ENCODE measurements at regions of chr9 and their contacts with region 1.

Region 1: DNA sequence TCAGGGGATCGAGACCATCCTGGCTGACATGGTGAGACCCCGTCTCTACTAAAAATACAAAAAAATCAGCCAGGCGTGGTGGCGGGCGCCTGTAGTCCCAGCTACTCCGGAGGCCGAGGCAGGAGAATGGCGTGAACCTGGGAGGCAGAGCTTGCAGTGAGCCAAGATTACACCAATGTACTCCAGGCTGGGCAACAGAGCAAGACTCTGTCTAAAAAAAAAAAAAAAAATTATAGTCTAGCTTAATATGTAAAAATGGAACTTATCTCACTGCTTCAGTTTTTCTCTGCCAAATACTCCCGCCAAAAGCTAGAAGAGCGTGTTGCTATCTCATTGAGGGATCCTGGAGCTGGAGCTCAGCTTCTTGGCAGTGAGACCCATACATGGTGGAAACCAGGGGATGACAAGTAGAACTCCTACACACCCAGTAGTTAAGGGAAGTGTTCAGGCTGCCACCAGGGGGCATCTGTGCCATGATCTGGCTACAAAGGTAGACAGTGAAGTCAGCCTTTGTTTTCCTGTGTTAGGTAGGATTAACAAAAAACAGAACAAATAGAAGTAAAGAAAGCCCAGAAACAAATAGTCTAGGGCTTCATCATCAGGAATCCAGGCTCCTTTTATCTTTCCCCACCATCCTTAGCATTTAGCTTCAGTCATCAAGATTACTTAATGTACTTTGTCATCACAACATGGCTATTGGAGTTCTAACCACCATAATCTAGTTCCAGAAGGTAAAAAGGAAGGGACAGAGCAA is 33.6 kb upstream of the GLIPR2 start:
- DNase-seq: peak; percentile 74 to 86
- ATAC-seq: peak; percentile 90 to 91
- H3K4me3 ChIP-seq: no peak overlapping the region
- H3K27ac ChIP-seq: peak overlapping the region; percentile 26 to 77
- H3K4me1 ChIP-seq: peaks cover 26% of the 10 kb centered on the region
- CTCF ChIP-seq: peak; percentile 71
- EP300 ChIP-seq: no peak
- POLR2A ChIP-seq: no peak
- RAD21 ChIP-seq: peak; percentile 64 to 84; a peak in 4 of 5 replicates

Region 2: GRCh38 chr9:35756275-35757225 is 346.4 kb before region 1 on chr9:
- CTCF ChIA-PET with region 1: no interaction called
- POLR2A ChIA-PET with region 1: no interaction called
- DNase-seq: peak; percentile 64 to 86
- ATAC-seq: peak; percentile 89 to 91
- H3K4me3 ChIP-seq: peak overlapping the region; percentile 83
- H3K27ac ChIP-seq: peak overlapping the region; percentile 95 to 97
- H3K4me1 ChIP-seq: peaks cover 16% of the 10 kb centered on the region
- CTCF ChIP-seq: peak; percentile 69
- EP300 ChIP-seq: no peak
- POLR2A ChIP-seq: peak; percentile 19
- RAD21 ChIP-seq: peak; percentile 34 to 42; a peak in 3 of 5 replicates

Region 3: DNA sequence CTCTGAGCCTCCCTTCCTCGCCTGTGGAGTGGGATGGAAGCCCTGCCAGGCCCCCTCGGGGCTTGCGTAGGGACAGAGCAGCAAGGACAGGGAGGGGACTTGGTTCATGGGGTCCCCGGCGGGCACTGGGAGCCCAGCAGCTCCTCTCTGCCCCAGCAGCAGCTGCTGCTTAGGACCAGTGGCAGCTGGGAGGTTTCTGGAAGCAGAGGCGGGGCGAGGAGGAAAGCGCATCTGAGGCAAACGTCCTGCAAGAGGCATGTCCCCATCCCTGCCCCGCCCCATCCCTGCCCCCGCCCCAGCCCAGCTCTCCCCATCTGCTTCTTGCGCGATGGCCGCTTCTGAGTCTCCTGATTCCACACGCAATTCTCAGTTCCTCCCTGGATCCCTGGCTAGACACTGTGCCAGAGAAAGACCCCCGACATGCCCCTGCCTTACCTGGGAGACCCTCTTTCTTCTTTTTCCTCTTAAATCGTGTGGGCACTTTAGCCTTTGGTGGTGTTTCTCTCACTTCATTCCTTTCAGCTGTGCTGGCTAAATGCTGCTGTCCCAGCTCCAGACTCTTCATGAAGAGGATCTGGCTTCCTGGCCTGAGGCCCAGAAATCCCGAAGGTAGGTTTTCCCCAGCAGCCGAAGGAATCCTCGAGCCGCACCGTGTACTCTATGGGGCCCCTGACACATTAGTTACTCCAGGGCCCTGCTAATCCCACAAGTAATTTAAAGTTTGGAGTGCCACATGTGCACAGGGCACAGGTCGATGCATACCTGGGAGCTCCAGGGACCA is 140.6 kb before region 1 on chr9:
- CTCF ChIA-PET with region 1: no interaction called
- POLR2A ChIA-PET with region 1: no interaction called
- DNase-seq: no peak
- ATAC-seq: peak; percentile 36 to 60; a peak in 3 of 6 replicates
- H3K4me3 ChIP-seq: no peak overlapping the region
- H3K27ac ChIP-seq: 0 out of 6 replicates have a peak overlapping the region, but pooled peaks of 1 of the 2 experiments have one; percentile 17
- H3K4me1 ChIP-seq: peaks cover 4% of the 10 kb centered on the region; the same call in 1 of the 3 replicates
- CTCF ChIP-seq: no peak
- EP300 ChIP-seq: no peak
- POLR2A ChIP-seq: no peak
- RAD21 ChIP-seq: no peak

Region 4: GRCh38 chr9:36023260-36024048 is 79.5 kb before region 1 on chr9:
- CTCF ChIA-PET with region 1: interaction called, 22 read pairs
- POLR2A ChIA-PET with region 1: no interaction called
- DNase-seq: peak; percentile 60 to 74
- ATAC-seq: peak; percentile 86 to 97
- H3K4me3 ChIP-seq: no peak overlapping the region
- H3K27ac ChIP-seq: no peak overlapping the region
- H3K4me1 ChIP-seq: no peaks in the 10 kb centered on the region
- CTCF ChIP-seq: peak; percentile 93
- EP300 ChIP-seq: no peak
- POLR2A ChIP-seq: no peak
- RAD21 ChIP-seq: peak; percentile 82 to 86

Region 5: DNA sequence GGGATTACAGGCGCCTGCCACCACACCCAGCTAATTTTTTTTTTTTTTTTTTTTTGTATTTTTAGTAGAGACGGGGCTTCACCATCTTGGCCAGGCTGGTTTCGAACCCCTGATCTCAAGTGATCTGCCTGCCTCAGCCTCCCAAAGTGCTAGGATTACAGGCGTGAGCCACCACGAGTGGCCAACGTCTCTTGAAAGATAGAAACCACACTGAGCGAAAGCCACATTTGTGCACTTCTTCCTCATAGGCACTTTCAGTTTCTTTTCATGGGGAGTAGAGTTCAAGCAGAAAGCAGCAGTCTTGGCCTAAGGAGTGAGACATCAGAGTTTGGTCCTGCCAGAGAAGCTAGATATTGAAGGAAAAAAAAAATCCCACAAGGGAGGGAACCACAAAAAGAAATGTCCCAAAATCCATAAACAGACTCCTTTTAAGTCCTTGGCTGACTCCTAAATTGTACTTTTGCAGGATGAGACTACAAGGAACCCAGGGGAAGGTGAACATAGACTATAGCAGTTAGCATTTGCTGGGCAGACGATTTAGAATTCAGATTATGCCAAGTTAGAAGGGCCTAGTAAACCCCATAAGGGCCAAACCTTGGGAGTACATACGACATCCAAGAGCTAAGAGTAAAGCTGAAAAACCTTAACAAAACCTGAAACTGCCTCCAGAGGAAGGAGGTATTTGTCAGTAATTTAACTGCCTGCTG is 10.3 kb before region 1 on chr9:
- CTCF ChIA-PET with region 1: interaction called, 58 read pairs
- POLR2A ChIA-PET with region 1: no interaction called
- DNase-seq: no peak
- ATAC-seq: no peak
- H3K4me3 ChIP-seq: no peak overlapping the region
- H3K27ac ChIP-seq: peak overlapping the region in 1 of 2 experiments; percentile 72; a peak in 2 of 6 replicates
- H3K4me1 ChIP-seq: peaks cover 31% of the 10 kb centered on the region; the same call in 2 of the 3 replicates
- CTCF ChIP-seq: no peak
- EP300 ChIP-seq: no peak
- POLR2A ChIP-seq: no peak
- RAD21 ChIP-seq: no peak

Region 6: DNA sequence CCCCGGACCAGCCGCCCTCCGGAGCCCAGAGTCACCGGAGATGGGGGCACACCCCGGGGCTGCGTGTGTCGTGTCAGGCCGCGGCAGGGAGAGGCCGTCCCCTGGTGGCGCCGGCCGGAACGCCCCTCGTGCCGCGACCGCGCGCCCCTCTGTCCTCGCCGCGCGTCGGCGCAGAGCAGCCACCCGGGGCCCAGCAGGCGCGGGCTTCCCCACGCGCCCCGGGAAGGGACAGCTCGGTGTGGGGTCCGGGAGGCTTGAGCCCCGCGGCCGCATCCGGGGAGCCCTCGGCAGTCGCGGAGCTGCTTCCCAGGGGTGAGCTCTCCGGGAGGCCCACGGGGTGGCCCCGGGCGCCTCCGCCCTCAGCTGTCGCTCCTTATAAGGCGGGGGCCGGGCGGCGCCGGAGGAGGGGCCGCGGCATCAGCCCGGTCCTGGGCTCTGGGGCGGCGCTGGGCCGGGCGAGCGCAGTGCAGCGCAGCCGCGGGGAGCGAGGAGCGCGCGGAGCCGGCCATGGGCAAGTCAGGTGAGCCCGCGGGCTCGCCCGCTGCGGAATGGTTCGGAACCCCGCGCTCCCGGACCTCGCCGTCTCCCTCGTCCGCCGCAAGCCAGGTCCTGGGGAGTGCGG is 33.5 kb after region 1 on chr9 and contains the start of gene GLIPR2:
- CTCF ChIA-PET with region 1: interaction called, 40 read pairs
- POLR2A ChIA-PET with region 1: interaction called, 4 read pairs
- DNase-seq: peak; percentile 49 to 77
- ATAC-seq: peak; percentile 87 to 94
- H3K4me3 ChIP-seq: peak within 1 kb of the TSS; percentile 78
- H3K27ac ChIP-seq: peak within 1 kb of the TSS; percentile 79 to 93
- H3K4me1 ChIP-seq: peaks cover 14% of the 10 kb centered on the region; the same call in 1 of the 3 replicates
- CTCF ChIP-seq: no peak; the same call in 2 of the 3 replicates
- EP300 ChIP-seq: no peak
- POLR2A ChIP-seq: peak; percentile 53
- RAD21 ChIP-seq: peak in 1 of 2 experiments; percentile 5; a peak in 1 of 5 replicates
- polyA plus RNA-seq, gene GLIPR2: 6.2 and 9.0 TPM in 2 replicates

Region 7: DNA sequence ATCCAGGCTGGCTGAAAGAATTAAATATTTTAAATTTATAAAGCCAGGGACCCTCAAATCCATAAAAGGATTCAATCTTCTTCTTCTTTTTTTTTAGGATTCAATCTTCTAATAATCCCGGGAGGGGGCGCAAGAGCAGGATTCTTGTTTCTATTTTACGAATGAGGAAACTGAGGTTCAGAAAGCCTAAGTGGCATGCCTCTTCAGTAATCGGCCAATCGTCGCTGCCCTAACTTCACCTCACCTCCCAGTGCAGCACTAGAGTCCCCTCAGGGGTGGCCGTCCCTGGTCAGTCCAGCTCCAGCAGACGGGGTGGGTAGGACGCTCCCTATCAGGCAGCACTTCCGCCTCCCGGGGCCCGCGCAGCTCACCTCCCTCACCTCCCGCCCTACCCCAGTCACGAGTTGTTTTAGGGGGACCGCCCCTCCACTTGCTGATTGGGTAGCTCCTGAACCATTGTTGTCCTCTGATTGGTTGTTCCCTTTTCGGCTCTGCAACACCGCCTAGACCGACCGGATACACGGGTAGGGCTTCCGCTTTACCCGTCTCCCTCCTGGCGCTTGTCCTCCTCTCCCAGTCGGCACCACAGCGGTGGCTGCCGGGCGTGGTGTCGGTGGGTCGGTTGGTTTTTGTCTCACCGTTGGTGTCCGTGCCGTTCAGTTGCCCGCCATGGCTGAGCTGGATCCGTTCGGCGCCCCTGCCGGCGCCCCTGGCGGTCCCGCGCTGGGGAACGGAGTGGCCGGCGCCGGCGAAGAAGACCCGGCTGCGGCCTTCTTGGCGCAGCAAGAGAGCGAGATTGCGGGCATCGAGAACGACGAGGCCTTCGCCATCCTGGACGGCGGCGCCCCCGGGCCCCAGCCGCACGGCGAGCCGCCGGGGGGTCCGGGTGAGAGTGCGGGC is 87.7 kb after region 1 on chr9 and contains the start of gene CLTA:
- CTCF ChIA-PET with region 1: interaction called, 27 read pairs
- POLR2A ChIA-PET with region 1: interaction called, 21 read pairs
- DNase-seq: peak; percentile 99
- ATAC-seq: peak; percentile 98 to 99
- H3K4me3 ChIP-seq: peak within 1 kb of the TSS; percentile 87
- H3K27ac ChIP-seq: peak within 1 kb of the TSS; percentile 89 to 96
- H3K4me1 ChIP-seq: peaks cover 28% of the 10 kb centered on the region
- CTCF ChIP-seq: peak; percentile 62
- EP300 ChIP-seq: no peak
- POLR2A ChIP-seq: peak; percentile 93
- RAD21 ChIP-seq: peak in 1 of 2 experiments; percentile 30; a peak in 1 of 5 replicates
- polyA plus RNA-seq, gene CLTA: 203 and 291 TPM in 2 replicates